ENCODE measurements at regions of chr11 and their contacts with region 1.

Region 1: DNA sequence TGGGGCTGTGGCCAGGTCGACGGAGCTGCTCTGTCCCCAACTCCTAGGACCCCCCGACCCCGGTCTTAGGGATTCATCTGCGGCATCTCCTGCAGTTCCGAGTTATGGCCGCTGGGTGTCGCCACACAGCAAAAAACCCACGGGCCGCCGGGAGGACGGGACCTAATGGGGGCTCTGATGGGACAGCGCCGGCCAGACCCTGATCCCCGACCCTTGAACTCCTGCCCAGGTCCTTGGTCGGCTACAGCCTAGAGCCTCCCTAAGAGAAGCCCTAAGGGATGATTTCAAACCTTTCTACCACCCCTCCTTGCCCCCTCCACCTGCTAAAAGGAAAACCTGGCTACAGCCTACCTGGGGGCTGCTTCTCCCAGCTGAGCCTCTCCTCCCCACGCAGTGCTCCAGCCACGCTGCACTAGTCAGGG is 30.8 kb upstream of the LRRC10B start:
- DNase-seq: no peak
- H3K4me3 ChIP-seq: no peak overlapping the region
- H3K27me3 ChIP-seq: peaks cover 1% of the 10 kb centered on the region
- CTCF ChIP-seq: peak; percentile 90

Region 2: GRCh38 chr11:61369372-61370219 is 108.1 kb before region 1 on chr11:
- CTCF ChIA-PET with region 1: no interaction called
- POLR2A ChIA-PET with region 1: no interaction called
- DNase-seq: no peak
- H3K4me3 ChIP-seq: no peak overlapping the region
- H3K27me3 ChIP-seq: no peaks in the 10 kb centered on the region
- CTCF ChIP-seq: no peak

Region 3: GRCh38 chr11:61488651-61489291 is 11.0 kb after region 1 on chr11:
- CTCF ChIA-PET with region 1: interaction called, 29 read pairs
- POLR2A ChIA-PET with region 1: no interaction called
- DNase-seq: no peak
- H3K4me3 ChIP-seq: no peak overlapping the region
- H3K27me3 ChIP-seq: peaks cover 6% of the 10 kb centered on the region; the same call in 1 of the 2 replicates
- CTCF ChIP-seq: no peak

Region 4: DNA sequence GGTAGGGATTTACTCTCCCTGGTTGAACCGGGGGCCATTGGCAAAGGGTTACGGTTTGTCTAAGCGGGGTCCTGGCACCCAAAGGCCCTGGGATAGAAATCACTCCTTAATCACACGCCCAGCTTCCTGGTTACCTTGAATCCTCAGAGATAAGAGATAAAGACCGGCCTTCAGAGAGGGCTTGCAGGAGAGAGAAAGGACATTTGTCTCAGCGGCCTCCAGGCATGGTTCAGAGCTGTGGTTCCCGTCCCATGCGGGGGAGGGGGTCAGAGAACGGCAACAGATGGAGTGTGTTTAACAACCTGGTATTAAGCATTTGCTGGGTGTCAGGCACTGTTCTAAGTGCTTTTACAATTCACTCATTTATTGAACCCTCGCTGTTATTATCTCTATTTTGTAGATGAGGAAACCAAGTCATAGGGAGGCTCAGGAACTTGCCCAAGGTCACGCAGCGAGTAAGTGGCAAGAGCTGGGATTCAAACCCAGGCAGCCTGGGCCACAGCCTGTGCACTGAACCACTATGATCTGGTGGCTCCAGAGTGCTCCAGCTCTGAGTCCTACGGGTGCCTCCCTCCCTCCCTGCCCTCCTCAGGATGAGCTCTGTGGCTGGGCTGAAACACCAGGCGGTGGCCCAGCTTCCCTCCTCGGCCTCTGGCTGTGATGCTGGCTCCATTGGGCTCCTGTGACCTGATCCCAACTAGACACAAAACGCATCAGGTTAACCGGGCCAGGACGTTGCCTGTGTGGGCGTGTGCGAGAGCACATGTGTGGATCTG is 49.4 kb after region 1 on chr11:
- CTCF ChIA-PET with region 1: interaction called, 12 read pairs
- POLR2A ChIA-PET with region 1: no interaction called
- DNase-seq: no peak
- H3K4me3 ChIP-seq: no peak overlapping the region
- H3K27me3 ChIP-seq: peaks cover 26% of the 10 kb centered on the region
- CTCF ChIP-seq: no peak

Region 5: DNA sequence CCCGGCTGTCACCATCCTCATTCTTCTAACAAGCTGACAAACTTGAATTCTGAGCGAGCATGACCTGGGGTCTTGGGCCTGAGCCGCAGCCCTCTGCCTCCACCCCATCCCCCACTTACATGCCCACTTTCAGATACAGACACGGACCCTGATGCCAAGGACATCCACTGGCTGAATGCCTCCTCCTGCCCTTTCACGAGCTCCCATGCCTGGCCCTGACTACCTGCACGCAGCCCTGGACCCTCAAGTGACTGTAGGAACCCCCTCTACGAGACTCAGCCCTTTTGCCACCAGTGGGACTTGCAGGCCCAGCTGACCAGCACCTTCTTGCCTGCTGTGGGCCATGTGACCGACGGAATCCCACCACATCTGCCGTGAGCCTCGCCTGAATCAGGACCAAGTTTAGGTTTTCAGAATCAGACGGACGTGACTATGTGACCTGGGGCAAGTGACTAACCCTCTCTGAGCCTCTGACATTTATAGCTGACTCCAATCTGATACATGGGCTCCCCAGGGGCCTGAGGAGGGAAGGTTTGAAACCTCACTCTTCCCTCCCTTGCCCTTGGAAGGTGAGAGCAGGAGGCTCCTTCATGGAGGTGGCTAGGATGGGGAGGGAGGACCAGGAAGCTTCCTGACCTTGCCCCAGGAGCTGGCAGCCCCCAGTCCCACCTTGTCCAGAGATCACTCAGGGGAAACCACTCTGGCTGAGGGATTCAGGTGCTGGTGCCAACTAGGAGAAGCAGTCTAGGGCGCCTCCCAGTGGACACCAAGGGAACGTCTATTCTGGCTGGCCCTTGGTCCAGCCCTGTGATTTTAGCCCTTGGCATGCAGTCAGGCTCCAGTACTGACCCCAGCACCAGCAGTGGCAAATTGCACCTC is 150.1 kb after region 1 on chr11:
- CTCF ChIA-PET with region 1: interaction called, 93 read pairs
- POLR2A ChIA-PET with region 1: no interaction called
- DNase-seq: no peak
- H3K4me3 ChIP-seq: no peak overlapping the region
- H3K27me3 ChIP-seq: peaks cover 3% of the 10 kb centered on the region
- CTCF ChIP-seq: peak; percentile 92

Region 6: DNA sequence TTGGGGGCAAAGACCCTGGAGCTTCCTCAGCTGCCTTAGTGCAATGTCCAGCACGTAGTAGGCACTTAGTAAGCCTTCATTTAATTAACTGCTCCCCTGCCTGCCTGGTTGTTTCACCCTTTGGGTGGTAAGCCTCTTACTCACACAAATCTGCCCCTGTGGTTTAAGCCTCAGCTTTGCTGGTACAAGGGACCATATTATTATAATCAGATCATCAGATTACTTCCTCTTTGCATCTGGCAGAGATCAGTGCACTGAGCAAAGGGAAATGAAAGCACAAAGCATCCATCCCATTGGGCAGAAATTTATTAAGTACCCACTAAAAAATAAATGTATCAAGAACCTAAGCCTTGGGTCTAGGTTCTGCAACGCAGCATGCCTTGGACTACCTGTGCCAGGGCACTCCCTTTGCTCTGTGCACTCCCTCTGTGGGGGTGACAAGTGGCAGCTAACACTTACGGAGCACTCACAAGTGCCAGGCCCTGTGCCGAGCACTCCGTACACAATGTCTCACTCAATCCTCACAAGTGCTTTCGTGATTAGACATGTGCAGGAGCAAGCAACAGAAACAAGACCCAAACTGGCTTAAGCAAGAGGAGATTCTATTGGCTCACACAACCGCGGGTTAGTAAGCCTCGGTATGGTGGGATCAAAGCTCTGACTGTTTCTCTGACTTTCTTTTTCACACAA is 167.6 kb after region 1 on chr11:
- CTCF ChIA-PET with region 1: interaction called, 93 read pairs
- POLR2A ChIA-PET with region 1: no interaction called
- DNase-seq: no peak
- H3K4me3 ChIP-seq: no peak overlapping the region
- H3K27me3 ChIP-seq: no peaks in the 10 kb centered on the region
- CTCF ChIP-seq: no peak